ENCODE measurements at regions of chr7 and their contacts with region 1.

Region 1: DNA sequence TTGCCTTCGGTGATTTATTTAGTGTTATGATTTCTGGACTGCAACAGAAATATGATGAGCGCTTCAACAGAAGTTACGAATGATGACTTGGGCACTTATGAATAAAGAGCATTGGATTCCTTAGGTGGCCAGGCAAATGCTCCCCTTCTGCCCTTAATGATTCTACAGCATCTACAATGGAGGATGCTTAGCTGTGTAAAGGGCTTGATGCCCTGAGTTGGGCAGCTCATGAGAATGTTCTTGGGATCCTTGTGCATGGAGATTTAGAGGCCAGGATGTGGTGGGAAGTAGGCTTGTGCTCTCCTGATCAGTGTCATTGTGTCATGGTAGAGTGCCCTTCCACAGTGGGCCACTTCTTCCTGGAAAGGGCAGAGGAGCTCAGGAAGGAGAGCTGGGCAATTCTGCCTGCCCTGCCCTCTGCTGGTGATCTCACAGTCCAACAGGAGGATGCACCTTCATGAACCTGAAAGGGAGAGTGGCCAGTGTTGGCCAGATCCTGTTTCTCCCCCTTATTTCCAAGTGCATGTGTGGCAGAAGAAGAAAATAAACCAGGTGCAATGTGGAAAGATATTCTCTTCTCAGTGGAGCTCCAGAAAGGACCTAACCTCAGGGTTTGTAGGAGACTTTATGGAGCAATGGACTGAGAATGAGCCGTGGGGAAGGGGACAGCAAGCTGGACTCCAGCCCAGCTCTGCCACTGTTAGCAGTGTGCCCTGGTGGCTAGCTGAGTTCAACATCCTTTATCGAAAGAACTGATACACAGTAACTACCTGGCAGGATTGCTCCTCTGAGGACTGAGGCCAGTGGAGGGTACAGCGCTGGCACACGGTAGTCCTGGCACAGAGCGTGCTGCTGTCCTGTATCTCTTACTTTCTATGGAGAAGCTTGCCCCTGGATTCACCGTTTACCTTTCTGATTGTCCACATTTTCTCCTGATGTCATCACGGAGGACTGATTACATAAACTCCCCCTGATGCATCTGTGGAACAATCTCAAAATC is 182.9 kb downstream of the BMPER start:
- DNase-seq: peak; percentile 73
- ATAC-seq: peak; percentile 98
- H3K4me3 Mint-ChIP-seq: no peak overlapping the region
- H3K27ac Mint-ChIP-seq: no peak overlapping the region
- H3K4me1 Mint-ChIP-seq: no peaks in the 10 kb centered on the region
- H3K27me3 Mint-ChIP-seq: no peaks in the 10 kb centered on the region
- CTCF ChIP-seq: peak; percentile 79

Region 2: DNA sequence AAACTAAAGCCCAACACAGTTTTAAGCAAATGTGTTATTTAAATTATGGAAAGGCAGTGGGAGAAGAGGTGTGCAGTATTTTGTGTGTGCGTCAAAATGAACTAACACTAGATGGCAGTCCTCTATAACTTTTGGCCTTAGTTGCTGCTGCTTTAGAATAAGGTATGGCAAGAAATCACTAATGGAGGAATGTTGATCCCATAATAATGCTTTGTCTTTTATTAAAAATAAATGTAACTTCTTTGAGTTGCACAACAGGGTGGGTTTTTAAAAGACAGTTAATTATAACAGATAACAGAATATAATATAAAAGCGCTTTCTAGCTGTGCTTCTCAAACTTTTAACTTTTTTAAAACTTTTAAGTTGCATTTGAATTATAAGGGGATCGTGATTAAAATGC is 902.4 kb before region 1 on chr7:
- CTCF ChIA-PET with region 1: interaction called, 12 read pairs
- POLR2A ChIA-PET with region 1: no interaction called
- DNase-seq: no peak
- ATAC-seq: peak; percentile 84
- H3K4me3 Mint-ChIP-seq: no peak overlapping the region
- H3K27ac Mint-ChIP-seq: no peak overlapping the region
- H3K4me1 Mint-ChIP-seq: peaks cover 12% of the 10 kb centered on the region
- H3K27me3 Mint-ChIP-seq: no peaks in the 10 kb centered on the region
- CTCF ChIP-seq: peak; percentile 50; the same call in 1 of the 2 replicates

Region 3: DNA sequence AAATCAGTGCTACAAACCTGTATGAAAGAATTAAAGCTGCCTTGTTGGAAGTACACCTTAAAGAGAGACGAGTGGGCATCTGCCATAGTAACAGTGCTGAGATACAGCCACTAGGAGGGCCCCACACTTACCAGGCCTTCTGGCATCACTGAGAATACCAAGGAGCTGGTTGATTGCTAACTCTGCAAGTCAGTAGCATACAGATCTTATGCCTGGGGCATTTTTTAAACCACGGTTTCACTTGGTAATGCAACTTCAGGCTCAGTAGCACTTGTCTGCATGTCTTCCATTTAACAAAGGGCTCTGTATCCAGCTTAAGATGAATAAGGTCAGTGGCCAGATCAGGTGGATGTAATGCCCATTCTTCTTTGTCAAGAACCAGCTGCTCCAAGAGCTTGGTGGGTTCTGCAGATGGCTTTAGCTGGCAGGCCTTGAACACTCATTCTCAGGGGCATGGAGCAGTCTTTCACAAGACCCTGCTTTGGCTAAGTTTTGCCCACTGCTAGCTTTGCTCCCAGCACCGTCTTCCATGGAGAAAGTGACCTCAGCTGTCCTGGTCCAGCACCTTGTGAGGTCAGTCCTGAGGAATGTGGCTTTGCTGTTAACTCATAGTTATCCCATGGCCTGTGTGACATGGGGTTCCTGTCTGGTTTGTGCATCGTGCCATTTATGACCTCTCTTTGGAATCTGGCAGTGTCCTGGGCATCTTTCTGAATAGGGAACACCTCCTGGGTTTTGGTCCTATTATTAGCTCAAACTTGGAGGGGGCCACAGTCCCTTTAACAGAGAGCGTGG is 114.8 kb before region 1 on chr7:
- CTCF ChIA-PET with region 1: interaction called, 10 read pairs
- POLR2A ChIA-PET with region 1: no interaction called
- DNase-seq: no peak
- ATAC-seq: no peak
- H3K4me3 Mint-ChIP-seq: no peak overlapping the region
- H3K27ac Mint-ChIP-seq: no peak overlapping the region
- H3K4me1 Mint-ChIP-seq: peaks cover 23% of the 10 kb centered on the region
- H3K27me3 Mint-ChIP-seq: no peaks in the 10 kb centered on the region; the same call in 1 of the 2 replicates
- CTCF ChIP-seq: no peak

Region 4: DNA sequence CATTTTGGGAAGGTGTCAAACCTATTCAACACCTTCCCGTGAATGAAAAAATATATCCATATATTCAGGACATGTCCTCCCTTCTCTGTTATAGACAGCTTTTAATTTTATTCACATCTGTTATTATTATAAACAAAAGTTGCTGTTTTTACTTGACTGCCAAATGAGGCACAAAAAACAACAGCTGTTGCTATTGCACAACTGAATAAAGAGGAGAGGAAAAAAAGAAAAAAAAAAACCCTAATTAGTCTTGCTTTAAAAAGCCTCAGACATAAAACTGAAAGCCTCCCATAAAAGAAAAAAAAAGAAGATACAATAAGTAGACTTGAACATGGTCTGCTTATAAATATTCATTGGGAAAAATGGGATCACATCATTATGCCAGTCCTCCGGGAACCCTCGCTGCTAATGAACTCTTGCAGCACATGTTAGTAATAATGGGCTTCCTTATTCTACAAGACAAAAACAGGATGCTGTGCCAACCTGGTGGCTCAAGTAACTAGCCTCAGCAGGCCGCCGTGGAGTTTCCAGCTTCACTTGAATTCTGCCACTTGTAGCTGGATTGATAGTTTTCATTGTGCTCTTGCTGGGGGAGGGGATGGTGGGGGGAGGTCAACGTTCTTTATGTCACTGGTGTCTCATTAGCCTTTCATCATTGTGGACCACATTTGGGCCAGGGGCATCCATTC is 29.2 kb before region 1 on chr7:
- CTCF ChIA-PET with region 1: interaction called, 22 read pairs
- POLR2A ChIA-PET with region 1: interaction called, 6 read pairs
- DNase-seq: peak; percentile 20
- ATAC-seq: peak; percentile 64
- H3K4me3 Mint-ChIP-seq: no peak overlapping the region
- H3K27ac Mint-ChIP-seq: no peak overlapping the region
- H3K4me1 Mint-ChIP-seq: peaks cover 58% of the 10 kb centered on the region
- H3K27me3 Mint-ChIP-seq: no peaks in the 10 kb centered on the region
- CTCF ChIP-seq: no peak

Region 5: DNA sequence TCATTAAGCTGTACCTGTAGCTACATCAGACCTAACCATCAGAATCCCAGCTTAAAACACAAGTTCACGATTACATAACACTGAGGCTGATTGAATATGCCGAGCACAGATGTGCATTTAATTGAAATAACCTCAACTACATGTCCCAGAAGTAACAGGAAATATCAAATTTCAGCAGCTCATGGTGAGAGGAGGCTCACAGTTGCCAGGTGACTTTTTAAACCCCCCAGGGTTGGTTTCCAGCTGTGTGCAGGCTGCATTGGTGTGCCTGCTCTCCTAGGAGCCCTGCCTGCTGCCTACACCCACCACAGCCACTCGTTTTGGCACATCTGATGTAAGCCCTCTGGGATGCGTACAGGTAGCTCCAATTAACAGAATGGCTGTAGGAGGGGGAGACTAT is 21.2 kb before region 1 on chr7:
- CTCF ChIA-PET with region 1: interaction called, 18 read pairs
- POLR2A ChIA-PET with region 1: no interaction called
- DNase-seq: no peak
- ATAC-seq: peak; percentile 75
- H3K4me3 Mint-ChIP-seq: no peak overlapping the region
- H3K27ac Mint-ChIP-seq: peak overlapping the region; percentile 57; the same call in 1 of the 2 replicates
- H3K4me1 Mint-ChIP-seq: peaks cover 55% of the 10 kb centered on the region
- H3K27me3 Mint-ChIP-seq: no peaks in the 10 kb centered on the region
- CTCF ChIP-seq: no peak

Region 6: DNA sequence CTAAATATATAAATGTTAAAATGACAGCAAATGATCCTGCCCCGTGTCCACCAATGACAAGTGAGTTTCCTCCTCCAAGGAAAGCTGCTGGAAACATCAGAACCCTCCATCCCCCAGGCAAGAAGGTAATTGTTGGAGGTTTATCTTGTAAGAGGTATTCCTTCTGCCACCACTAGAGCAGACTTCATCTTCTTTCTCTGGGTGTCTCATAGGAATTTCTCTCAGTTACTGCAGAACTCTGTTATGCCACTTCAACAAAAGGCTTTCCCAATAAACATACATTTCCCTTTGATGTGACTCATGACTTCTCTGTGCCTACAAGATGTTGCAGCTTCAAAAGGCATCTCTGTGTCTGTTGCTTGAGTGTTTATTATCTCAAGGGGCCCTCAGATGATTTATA is 96.3 kb after region 1 on chr7:
- CTCF ChIA-PET with region 1: no interaction called
- POLR2A ChIA-PET with region 1: no interaction called
- DNase-seq: no peak
- ATAC-seq: peak; percentile 74
- H3K4me3 Mint-ChIP-seq: no peak overlapping the region
- H3K27ac Mint-ChIP-seq: no peak overlapping the region
- H3K4me1 Mint-ChIP-seq: peaks cover 11% of the 10 kb centered on the region; the same call in 1 of the 2 replicates
- H3K27me3 Mint-ChIP-seq: no peaks in the 10 kb centered on the region
- CTCF ChIP-seq: no peak

Measured in WTC11 (cell line).